Endothelial cell of umbilical vein (primary cell): ENCODE measurements at regions of chr22 and their contacts with region 1.

Region 1: GRCh38 chr22:46762238-46763050 is at the start of gene TBC1D22A:
- DNase-seq: peak; percentile 94
- H3K4me3 ChIP-seq: peak within 1 kb of the TSS; percentile 74 to 87 (median 77)
- H3K27ac ChIP-seq: peak within 1 kb of the TSS; percentile 87
- H3K4me1 ChIP-seq: peaks cover 24% of the 10 kb centered on the region
- H3K27me3 ChIP-seq: no peaks in the 10 kb centered on the region
- CTCF ChIP-seq: no peak
- POLR2A ChIP-seq: peak; percentile 98
- total RNA-seq, gene TBC1D22A: 32.4 and 32.9 TPM in 2 replicates

Region 2: DNA sequence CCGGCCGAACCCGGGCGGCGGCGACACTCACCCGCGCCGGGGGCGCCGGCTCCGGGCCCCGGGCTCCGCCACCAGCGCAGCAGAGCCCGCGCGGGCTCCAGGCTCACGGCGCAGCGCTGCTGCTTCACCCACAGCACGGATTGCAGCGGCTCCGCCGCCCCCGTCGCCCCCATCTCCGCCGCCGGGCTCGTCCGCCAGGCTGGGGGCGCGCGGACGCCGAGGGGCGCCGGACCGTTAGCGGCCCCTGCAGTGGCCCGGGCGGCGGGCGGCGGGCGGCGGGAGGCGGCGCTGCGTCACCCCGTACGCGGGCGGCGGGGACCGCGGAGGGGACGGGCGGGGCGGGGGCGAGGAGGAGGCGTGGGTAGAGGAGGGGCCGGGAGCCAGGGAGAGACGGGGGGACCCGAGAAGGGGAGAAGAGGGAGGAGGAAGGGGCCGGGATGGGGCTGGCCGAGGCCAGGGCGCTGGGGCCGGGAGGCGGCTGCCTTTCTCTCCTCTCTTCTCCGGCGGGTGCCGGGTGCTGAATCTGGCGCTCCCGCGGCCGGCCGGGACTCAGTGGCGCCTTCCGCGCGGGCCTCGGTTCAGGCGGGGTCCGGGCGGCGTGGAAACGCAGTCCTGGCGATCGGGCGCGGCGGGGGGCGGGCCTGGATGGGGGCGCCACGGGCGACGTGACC is 24.3 kb before region 1 on chr22 and contains the start of gene CERK:
- CTCF ChIA-PET with region 1: interaction called, 40 read pairs
- POLR2A ChIA-PET with region 1: interaction called, 10 read pairs
- dilution Hi-C with region 1: no loop called
- intact Hi-C with region 1: no loop called
- DNase-seq: peak; percentile 73
- H3K4me3 ChIP-seq: peak within 1 kb of the TSS; percentile 60 to 97 (median 75)
- H3K27ac ChIP-seq: peak within 1 kb of the TSS; percentile 90
- H3K4me1 ChIP-seq: peaks cover 39% of the 10 kb centered on the region
- H3K27me3 ChIP-seq: no peaks in the 10 kb centered on the region
- CTCF ChIP-seq: no peak
- POLR2A ChIP-seq: peak; percentile 69
- total RNA-seq, gene CERK: 88.0 and 104 TPM in 2 replicates

Region 3: DNA sequence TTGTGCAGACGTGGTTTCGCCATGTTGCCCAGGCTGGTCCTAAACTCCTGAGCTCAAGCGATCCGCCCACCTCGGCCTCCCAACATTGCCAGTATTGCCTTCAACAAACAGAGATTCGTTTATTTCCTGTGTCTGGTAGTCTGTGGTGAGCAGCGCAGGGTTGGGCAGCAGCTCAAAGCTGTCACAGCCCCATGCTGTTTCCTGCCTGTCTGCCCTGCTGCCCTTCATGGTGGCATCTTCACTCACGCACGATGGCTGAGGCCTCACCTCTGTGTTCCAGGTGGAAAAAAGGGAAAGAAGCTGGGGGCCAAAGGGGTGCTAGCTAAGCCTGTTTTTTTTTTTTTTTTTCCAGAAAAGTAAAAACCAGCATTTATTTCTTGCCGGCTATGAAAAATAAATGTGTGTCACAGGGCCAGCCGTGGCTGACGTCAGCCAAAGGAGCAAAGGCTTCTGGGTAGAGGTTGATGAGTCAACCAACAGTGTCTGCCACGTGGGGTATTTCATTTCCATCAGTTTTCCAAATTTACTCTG is 28.8 kb after region 1 on chr22:
- CTCF ChIA-PET with region 1: interaction called, 12 read pairs
- POLR2A ChIA-PET with region 1: interaction called, 6 read pairs
- dilution Hi-C with region 1: no loop called
- intact Hi-C with region 1: loop called (anchors 1 kb)
- DNase-seq: peak; percentile 42
- H3K4me3 ChIP-seq: no peak overlapping the region
- H3K27ac ChIP-seq: peak overlapping the region; percentile 76
- H3K4me1 ChIP-seq: peaks cover 25% of the 10 kb centered on the region
- H3K27me3 ChIP-seq: no peaks in the 10 kb centered on the region
- CTCF ChIP-seq: no peak
- POLR2A ChIP-seq: no peak

Region 4: DNA sequence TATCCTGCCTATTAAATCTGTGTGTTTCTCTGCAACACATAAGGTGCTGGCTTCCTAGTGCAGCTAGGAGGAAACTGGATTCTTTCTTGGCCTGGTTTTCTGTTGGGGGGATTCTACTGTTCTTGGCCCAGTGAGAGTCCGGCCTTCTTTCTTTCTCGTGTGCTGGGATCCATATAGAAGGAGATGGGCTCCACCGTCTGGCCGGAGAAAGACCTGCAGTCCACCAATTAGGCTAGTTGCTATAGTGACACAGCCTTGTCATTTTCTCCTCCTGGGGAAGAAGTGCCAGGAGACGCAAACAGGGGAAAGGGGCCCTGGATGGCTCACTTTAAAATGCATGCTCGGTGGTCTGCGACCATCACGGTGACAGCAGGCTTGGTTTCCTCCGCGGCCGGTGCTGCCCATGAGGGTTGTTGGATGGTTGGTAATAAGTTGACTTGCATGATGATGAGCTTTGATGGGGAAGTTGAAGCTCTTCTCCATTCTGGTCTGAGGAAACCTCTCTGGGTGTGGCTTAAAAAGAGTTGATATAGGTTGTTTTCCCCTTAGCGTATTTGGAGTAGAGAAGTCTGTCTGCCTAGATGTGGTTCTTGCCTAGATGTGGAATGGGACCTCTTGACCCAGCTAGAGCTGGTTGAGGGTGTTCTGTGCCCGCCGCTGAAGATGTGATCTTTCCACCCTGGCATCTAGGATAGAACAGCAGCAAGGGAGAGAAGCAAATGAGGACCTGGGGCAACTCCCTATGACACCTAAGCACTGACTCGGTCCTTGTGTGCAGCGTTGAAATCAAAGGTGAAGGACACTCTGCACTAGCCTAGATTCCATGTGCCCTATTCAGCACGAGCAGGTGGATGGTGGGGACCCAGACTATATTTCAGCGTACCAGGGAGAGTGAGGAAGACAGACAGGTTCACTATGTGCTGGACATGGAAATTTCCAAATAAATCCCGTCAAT is 1730.2 kb after region 1 on chr22:
- CTCF ChIA-PET with region 1: interaction called, 12 read pairs
- POLR2A ChIA-PET with region 1: no interaction called
- dilution Hi-C with region 1: no loop called
- intact Hi-C with region 1: no loop called
- DNase-seq: peak; percentile 66
- H3K4me3 ChIP-seq: no peak overlapping the region
- H3K27ac ChIP-seq: no peak overlapping the region
- H3K4me1 ChIP-seq: no peaks in the 10 kb centered on the region
- H3K27me3 ChIP-seq: peaks cover 22 to 29% of the 10 kb centered on the region in 2 experiments
- CTCF ChIP-seq: peak; percentile 67 to 78
- POLR2A ChIP-seq: no peak